T-cell (primary cell): ENCODE measurements at regions of chr12 and their contacts with region 1.

Region 1: GRCh38 chr12:21683115-21683514 is 25.5 kb upstream of the LDHB start:
- DNase-seq: no peak
- ATAC-seq: no peak
- H3K4me3 ChIP-seq: no peak overlapping the region
- H3K4me3 Mint-ChIP-seq: no peak overlapping the region
- H3K27ac ChIP-seq: no peak overlapping the region
- H3K27ac Mint-ChIP-seq: no peak overlapping the region
- H3K4me1 ChIP-seq: peaks cover 8 to 17% of the 10 kb centered on the region in 2 experiments
- H3K4me1 Mint-ChIP-seq: peaks cover 23 to 24% (median 24%) of the 10 kb centered on the region in 3 donors
- H3K27me3 ChIP-seq: peaks cover 0 to 9% of the 10 kb centered on the region in 2 experiments
- H3K27me3 Mint-ChIP-seq: no peaks in the 10 kb centered on the region

Region 2: GRCh38 chr12:21604245-21605101 is 78.6 kb before region 1 on chr12 and contains the start of gene GYS2:
- CTCF ChIA-PET with region 1: interaction called, 12 to 13 read pairs
- POLR2A ChIA-PET with region 1: no interaction called
- DNase-seq: no peak
- ATAC-seq: no peak
- H3K4me3 ChIP-seq: no peak within 1 kb of the TSS
- H3K4me3 Mint-ChIP-seq: no peak within 1 kb of the TSS
- H3K27ac ChIP-seq: no peak within 1 kb of the TSS
- H3K27ac Mint-ChIP-seq: no peak within 1 kb of the TSS
- H3K4me1 ChIP-seq: peaks cover 0 to 5% of the 10 kb centered on the region in 2 experiments
- H3K4me1 Mint-ChIP-seq: no peaks in the 10 kb centered on the region
- H3K27me3 ChIP-seq: no peaks in the 10 kb centered on the region
- H3K27me3 Mint-ChIP-seq: no peaks in the 10 kb centered on the region
- total RNA-seq, gene GYS2: 0.23 to 0.40 (median 0.28) TPM in 3 of 5 donors, not detected in the others

Region 3: DNA sequence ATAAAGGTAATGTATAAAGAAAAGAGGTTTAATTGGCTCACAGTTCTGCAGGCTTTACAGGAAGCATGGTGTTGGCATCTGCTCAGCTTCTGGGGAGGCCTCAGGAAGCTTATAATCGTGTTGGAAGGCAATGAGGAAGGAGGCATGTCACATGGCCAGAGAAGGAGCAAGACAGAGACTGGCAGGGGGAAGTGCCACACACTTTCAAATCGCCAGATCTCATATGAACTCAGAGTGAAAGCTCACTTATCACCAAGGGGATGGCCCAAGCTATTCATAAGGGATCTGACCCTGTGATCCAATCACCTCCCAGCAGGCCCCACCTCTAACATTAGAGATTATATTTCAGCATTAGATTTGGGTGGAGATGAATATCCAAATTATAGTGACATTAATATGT is 51.7 kb before region 1 on chr12:
- CTCF ChIA-PET with region 1: interaction called in 1 of 2 experiments, 3 read pairs
- POLR2A ChIA-PET with region 1: interaction called in 1 of 2 experiments, 11 read pairs
- DNase-seq: no peak
- ATAC-seq: no peak
- H3K4me3 ChIP-seq: no peak overlapping the region
- H3K4me3 Mint-ChIP-seq: no peak overlapping the region
- H3K27ac ChIP-seq: no peak overlapping the region
- H3K27ac Mint-ChIP-seq: peak overlapping the region; percentile 30
- H3K4me1 ChIP-seq: no peaks in the 10 kb centered on the region
- H3K4me1 Mint-ChIP-seq: peaks cover 6 to 13% (median 9%) of the 10 kb centered on the region in 3 donors
- H3K27me3 ChIP-seq: no peaks in the 10 kb centered on the region
- H3K27me3 Mint-ChIP-seq: no peaks in the 10 kb centered on the region

Region 4: DNA sequence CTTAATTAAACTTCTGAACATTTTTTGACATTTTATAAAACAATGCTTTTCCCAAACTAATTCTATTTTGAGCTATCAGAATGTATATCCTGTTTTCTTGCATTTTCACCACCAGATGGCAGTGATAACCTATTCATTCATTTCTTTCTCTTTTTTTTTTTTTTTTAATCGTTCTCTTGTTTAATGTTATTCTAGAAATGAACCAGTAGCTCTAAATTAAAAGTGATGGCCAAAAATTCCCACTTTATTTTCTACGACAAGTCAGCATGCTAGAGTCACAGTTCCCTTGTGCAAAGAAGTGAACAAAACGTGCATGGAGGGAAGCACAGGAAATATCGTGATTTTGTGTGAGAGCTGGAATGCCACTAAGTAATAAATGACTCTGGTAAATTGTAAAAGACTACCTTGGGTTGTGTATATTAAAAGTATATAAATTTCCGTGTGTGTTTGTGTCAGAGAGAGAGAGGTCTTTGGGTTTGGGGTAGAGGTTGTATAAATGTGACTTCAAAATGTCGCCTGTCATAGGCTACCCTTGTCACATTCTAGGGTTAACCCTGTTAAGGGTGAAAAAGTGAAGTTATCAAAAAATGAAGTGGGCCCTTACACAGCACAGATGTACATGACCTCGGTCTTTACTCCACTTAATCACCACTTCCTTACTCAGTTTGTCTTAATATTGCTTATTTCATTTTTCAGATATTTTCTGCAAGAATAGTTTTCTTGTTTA is 15.0 kb after region 1 on chr12:
- CTCF ChIA-PET with region 1: interaction called, 6 to 10 read pairs
- POLR2A ChIA-PET with region 1: no interaction called
- DNase-seq: peak in 1 of 35 experiments; percentile 68
- ATAC-seq: no peak
- H3K4me3 ChIP-seq: no peak overlapping the region
- H3K4me3 Mint-ChIP-seq: no peak overlapping the region
- H3K27ac ChIP-seq: no peak overlapping the region
- H3K27ac Mint-ChIP-seq: no peak overlapping the region
- H3K4me1 ChIP-seq: peaks cover 0 to 2% of the 10 kb centered on the region in 2 experiments
- H3K4me1 Mint-ChIP-seq: peaks cover 7 to 14% (median 13%) of the 10 kb centered on the region in 3 donors
- H3K27me3 ChIP-seq: no peaks in the 10 kb centered on the region
- H3K27me3 Mint-ChIP-seq: peaks cover 0 to 3% of the 10 kb centered on the region in 2 donors